ENCODE measurements at regions of chr5 and their contacts with region 1.

Region 1: DNA sequence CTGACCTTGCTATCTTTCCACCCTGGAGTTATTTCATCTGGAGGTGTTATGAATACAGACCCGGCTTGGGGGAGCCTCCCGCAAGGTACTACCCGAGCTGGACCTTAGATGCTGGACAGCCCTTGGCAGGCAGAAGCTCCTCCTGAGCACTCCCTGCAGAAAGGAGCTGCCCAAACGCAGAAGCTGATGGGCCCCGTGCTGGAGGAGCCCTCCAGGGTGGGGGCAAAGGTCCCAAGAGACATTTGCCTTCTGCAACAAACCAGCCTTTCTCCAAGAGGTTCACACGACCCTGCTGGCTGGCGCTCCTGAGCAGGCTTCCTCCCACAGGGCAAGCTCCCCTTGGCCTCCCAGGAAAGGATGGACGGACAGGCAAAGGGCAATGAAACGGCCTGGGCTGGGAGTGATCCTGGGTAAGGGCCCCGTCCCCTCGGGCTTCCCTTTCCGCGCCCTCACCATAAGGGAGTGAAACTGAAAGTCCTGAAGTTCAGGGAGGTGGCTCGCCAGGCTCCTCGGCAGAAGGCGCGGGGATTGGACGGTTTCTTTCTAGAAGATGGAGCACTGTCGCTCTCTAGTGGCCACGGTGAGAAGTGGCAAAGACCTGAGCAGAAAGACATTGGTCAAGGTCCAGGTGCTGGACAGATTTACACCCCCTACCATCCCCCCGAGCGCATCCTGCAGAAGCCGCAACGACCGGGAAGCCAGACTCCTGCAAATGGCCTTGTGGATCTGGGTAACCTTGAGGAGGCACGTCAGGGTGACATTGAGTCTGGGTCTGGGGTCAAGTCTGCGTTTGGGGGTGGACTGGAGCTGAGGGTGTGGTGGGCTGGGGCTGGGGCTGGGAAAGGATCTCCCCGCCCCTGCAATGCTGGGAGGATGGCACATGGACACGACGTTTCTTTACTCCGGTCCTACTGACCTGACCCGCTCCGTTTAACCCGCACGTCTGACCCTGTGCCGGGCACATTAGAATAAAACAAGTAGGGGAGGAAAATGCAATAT is 56.4 kb downstream of the NEURL1B start:
- DNase-seq: peak; percentile 70 to 89
- H3K4me3 ChIP-seq: peak overlapping the region; percentile 64
- H3K27ac ChIP-seq: no peak overlapping the region
- H3K4me1 ChIP-seq: no peaks in the 10 kb centered on the region
- H3K27me3 ChIP-seq: peaks cover 15% of the 10 kb centered on the region
- CTCF ChIP-seq: peak; percentile 93

Region 2: DNA sequence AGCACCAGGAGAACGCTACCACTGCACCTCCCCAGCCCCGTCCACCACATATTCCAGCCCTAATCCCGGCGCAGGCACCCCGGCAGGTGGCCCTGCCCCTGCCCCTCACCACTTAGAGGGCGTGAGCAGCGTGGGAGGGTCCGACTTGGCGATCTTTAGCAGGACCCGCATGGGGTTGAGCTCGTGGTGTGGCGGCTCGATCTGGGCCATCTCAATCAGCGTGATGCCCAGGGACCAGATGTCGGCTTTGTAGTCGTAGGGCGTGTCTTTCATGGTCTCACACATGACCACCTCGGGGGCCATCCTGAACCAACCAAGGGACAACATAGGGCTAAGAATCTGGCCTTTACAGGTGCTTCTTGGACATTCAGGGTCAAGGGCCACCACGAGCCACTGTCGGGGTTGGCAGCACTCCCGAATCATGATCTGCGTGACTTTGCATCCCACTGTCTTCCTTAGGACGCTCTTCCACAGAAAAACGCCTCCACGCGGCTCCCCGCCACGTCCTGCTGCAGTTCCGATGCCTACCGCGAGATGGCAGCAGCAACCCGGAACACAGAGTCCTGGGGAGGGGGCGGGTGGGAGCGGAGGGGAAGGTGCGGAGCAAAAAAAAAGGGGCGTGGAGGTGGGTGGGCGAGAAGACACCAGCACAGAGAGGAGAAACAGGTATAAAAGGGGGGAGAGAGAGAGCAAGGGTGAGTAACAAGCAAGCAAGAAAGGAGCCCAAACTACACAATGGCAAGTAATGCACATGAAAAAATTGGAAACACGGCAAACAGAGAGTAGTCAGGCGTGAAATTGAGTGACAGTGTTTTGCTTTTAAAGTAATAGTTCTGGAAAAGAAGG is 590.7 kb before region 1 on chr5:
- CTCF ChIA-PET with region 1: no interaction called
- POLR2A ChIA-PET with region 1: no interaction called
- intact Hi-C with region 1: loop called (anchors 5 kb)
- DNase-seq: peak in 1 of 2 experiments; percentile 61
- H3K4me3 ChIP-seq: peak overlapping the region; percentile 29; the same call in 1 of the 2 replicates
- H3K27ac ChIP-seq: peak overlapping the region; percentile 25; the same call in 1 of the 2 replicates
- H3K4me1 ChIP-seq: peaks cover 27% of the 10 kb centered on the region
- H3K27me3 ChIP-seq: no peaks in the 10 kb centered on the region
- CTCF ChIP-seq: peak; percentile 99

Region 3: GRCh38 chr5:172463031-172463430 is 234.4 kb before region 1 on chr5:
- CTCF ChIA-PET with region 1: no interaction called
- POLR2A ChIA-PET with region 1: interaction called, 3 read pairs
- intact Hi-C with region 1: loop called (anchors 5 kb)
- DNase-seq: no peak
- H3K4me3 ChIP-seq: no peak overlapping the region
- H3K27ac ChIP-seq: no peak overlapping the region
- H3K4me1 ChIP-seq: peaks cover 5% of the 10 kb centered on the region; the same call in 1 of the 2 replicates
- H3K27me3 ChIP-seq: no peaks in the 10 kb centered on the region
- CTCF ChIP-seq: no peak

Region 4: GRCh38 chr5:172640822-172641358 is 56.5 kb before region 1 on chr5 and contains the start of gene NEURL1B:
- CTCF ChIA-PET with region 1: no interaction called
- POLR2A ChIA-PET with region 1: interaction called, 8 read pairs
- intact Hi-C with region 1: loop called (anchors 1 kb)
- DNase-seq: peak in 1 of 2 experiments; percentile 81
- H3K4me3 ChIP-seq: peak within 1 kb of the TSS; percentile 55
- H3K27ac ChIP-seq: no peak within 1 kb of the TSS
- H3K4me1 ChIP-seq: peaks cover 7% of the 10 kb centered on the region; the same call in 1 of the 2 replicates
- H3K27me3 ChIP-seq: no peaks in the 10 kb centered on the region
- CTCF ChIP-seq: no peak
- total RNA-seq, gene NEURL1B: 14.3 and 20.4 TPM in 2 replicates

Region 5: GRCh38 chr5:172777881-172778814 is 80.7 kb after region 1 on chr5:
- CTCF ChIA-PET with region 1: interaction called, 21 read pairs
- POLR2A ChIA-PET with region 1: no interaction called
- intact Hi-C with region 1: no loop called
- DNase-seq: peak; percentile 59 to 95
- H3K4me3 ChIP-seq: peak overlapping the region; percentile 39; the same call in 1 of the 2 replicates
- H3K27ac ChIP-seq: peak overlapping the region; percentile 100
- H3K4me1 ChIP-seq: peaks cover 74% of the 10 kb centered on the region
- H3K27me3 ChIP-seq: no peaks in the 10 kb centered on the region
- CTCF ChIP-seq: no peak

Measured in PC-9 (cell line).